ENCODE measurements at regions of chr17 and their contacts with region 1.

Region 1: GRCh38 chr17:77011173-77012011 is 129.4 kb upstream of the SEC14L1 start:
- DNase-seq: peak; percentile 83
- ATAC-seq: 0 out of 2 replicates have a peak, but pooled peaks have one; percentile 38
- H3K4me3 ChIP-seq: no peak overlapping the region
- H3K27ac ChIP-seq: no peak overlapping the region
- H3K4me1 ChIP-seq: no peaks in the 10 kb centered on the region; the same call in 1 of the 2 replicates
- H3K27me3 ChIP-seq: 0 out of 2 replicates have a peak, but pooled peaks cover 4% of the 10 kb centered on the region
- CTCF ChIP-seq: peak; percentile 94

Region 2: DNA sequence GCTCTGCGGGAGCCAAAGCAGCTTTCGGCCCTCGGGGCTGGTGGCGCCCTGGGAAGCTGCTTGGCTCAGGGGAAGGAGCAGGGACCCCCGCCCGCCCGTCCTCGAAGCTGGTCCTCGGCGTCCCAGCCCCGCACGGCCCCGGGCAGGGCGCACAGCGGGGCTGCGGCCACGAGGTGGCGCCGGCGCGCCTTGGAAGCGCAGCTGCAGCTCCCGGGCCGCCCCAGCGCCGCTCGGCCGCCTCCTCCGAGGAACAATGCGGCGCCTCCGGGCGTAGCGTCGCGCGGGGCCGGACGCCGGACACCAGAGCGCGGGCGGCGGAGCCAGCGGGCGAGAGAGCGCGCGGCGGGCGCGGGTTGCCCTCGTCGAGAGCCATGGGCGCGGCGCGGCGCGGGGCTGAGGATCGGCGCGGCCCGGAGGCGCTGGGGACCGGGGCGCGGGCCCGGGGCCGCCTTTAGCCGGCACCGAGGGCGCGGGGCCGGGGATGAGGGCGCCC is 143.2 kb before region 1 on chr17 and contains the start of gene MGAT5B:
- CTCF ChIA-PET with region 1: no interaction called
- POLR2A ChIA-PET with region 1: no interaction called
- intact Hi-C with region 1: loop called (anchors 5 kb)
- DNase-seq: peak; percentile 96
- ATAC-seq: peak; percentile 76
- H3K4me3 ChIP-seq: peak within 1 kb of the TSS; percentile 65
- H3K27ac ChIP-seq: peak within 1 kb of the TSS; percentile 33
- H3K4me1 ChIP-seq: peaks cover 46% of the 10 kb centered on the region
- H3K27me3 ChIP-seq: no peaks in the 10 kb centered on the region
- CTCF ChIP-seq: peak; percentile 82
- total RNA-seq, gene MGAT5B: 4.9 and 10.3 TPM in 2 replicates

Region 3: DNA sequence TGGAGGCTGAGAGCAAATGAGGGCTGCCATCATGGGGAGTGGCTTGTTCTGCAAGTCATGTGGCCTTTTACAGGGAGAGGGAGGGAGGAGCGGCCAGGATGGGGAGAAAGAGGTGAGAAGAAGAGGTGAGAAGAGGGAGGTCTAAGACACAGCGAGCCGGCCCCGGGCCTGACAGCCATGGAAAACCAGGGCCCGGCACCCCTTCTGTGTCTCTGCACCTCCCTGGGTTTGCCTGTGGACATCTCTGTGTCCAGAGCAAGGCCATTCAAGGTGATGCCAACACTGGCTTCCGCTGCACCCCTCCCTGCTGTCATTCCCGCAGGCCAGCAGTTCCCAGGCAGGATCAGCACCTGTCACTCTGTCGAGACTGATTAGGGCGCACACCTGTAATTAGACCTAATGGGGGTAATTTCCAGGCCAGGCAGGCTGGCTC is 67.6 kb before region 1 on chr17:
- CTCF ChIA-PET with region 1: no interaction called
- POLR2A ChIA-PET with region 1: no interaction called
- intact Hi-C with region 1: no loop called
- DNase-seq: no peak
- ATAC-seq: no peak
- H3K4me3 ChIP-seq: no peak overlapping the region
- H3K27ac ChIP-seq: no peak overlapping the region
- H3K4me1 ChIP-seq: no peaks in the 10 kb centered on the region
- H3K27me3 ChIP-seq: no peaks in the 10 kb centered on the region
- CTCF ChIP-seq: no peak

Region 4: GRCh38 chr17:77066165-77066564 is 54.8 kb after region 1 on chr17:
- CTCF ChIA-PET with region 1: no interaction called
- POLR2A ChIA-PET with region 1: no interaction called
- intact Hi-C with region 1: loop called (anchors 2 kb)
- DNase-seq: no peak
- ATAC-seq: 0 out of 2 replicates have a peak, but pooled peaks have one; percentile 7
- H3K4me3 ChIP-seq: no peak overlapping the region
- H3K27ac ChIP-seq: no peak overlapping the region
- H3K4me1 ChIP-seq: peaks cover 9% of the 10 kb centered on the region
- H3K27me3 ChIP-seq: no peaks in the 10 kb centered on the region
- CTCF ChIP-seq: no peak

Region 5: DNA sequence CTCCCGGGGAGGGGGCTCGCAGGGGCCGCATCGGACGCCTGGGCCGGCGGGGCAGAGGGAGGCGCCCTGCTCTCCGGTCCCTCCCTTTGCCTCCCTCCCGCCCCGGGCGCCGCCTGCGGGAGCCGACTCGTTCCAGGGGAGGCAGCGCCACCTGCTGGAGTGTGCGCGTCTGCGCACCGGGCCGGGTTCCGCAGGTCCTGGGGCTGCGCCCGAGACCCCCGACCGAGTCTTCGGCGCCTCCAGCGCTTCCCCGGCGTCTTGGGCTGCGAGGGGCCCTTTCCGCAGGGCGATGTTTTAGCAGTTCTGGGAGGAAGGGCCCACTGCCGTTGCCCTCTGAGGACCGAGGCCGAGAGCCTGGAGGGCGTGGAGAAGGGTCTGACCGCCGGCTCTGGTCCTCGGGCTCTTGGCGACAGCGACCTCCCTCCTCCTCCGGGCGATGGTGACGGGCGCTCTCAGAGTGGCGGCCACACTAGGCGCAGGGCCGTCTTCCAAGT is 235.7 kb after region 1 on chr17:
- CTCF ChIA-PET with region 1: no interaction called
- POLR2A ChIA-PET with region 1: no interaction called
- intact Hi-C with region 1: loop called (anchors 2 kb)
- DNase-seq: peak; percentile 89
- ATAC-seq: peak; percentile 92
- H3K4me3 ChIP-seq: peak overlapping the region; percentile 74
- H3K27ac ChIP-seq: no peak overlapping the region
- H3K4me1 ChIP-seq: peaks cover 3% of the 10 kb centered on the region; the same call in 1 of the 2 replicates
- H3K27me3 ChIP-seq: no peaks in the 10 kb centered on the region
- CTCF ChIP-seq: peak; percentile 97